Mammary epithelial cell (primary cell): ENCODE measurements at regions of chr20 and their contacts with region 1.

Region 1: GRCh38 chr20:64145458-64145857 is 18.8 kb upstream of the MYT1 start:
- DNase-seq: no peak
- H3K4me3 ChIP-seq: no peak overlapping the region
- H3K27ac ChIP-seq: no peak overlapping the region
- H3K4me1 ChIP-seq: no peaks in the 10 kb centered on the region
- H3K27me3 ChIP-seq: no peaks in the 10 kb centered on the region
- CTCF ChIP-seq: peak in 1 of 2 donors; percentile 9

Region 2: DNA sequence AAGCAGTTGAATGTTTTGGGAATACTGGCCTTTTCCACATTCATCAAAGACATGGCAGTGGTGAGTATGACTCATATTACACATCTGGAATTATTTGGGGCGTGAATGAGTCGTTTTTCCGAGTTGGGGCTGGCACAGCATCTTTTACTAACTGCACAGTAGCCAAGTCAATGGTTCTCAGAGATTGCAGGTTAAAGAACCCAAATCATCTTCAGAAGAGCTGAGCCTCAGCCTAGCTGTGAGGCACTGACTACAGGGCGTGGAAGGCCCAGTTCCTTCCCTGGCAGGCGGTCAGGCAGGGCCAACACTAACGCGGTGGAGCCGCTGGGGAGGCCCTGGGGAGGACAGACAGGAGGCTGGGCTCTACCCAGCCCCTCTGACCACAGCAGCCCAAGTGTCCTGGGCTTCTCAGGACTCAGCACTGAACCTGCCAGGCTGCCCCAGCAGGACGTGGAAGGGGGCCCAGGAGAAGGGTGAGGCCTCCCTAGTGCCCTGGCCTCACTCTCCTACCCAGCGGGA is 551.4 kb before region 1 on chr20:
- CTCF ChIA-PET with region 1: no interaction called
- dilution Hi-C with region 1: loop called (anchors 10 kb)
- in situ Hi-C with region 1: no loop called
- intact Hi-C with region 1: no loop called
- DNase-seq: no peak
- H3K4me3 ChIP-seq: no peak overlapping the region
- H3K27ac ChIP-seq: no peak overlapping the region
- H3K4me1 ChIP-seq: peaks cover 9% of the 10 kb centered on the region
- H3K27me3 ChIP-seq: no peaks in the 10 kb centered on the region
- CTCF ChIP-seq: no peak

Region 3: GRCh38 chr20:64161356-64162238 is 16.1 kb after region 1 on chr20:
- CTCF ChIA-PET with region 1: no interaction called
- dilution Hi-C with region 1: no loop called
- in situ Hi-C with region 1: no loop called
- intact Hi-C with region 1: no loop called
- DNase-seq: peak; percentile 38
- H3K4me3 ChIP-seq: no peak overlapping the region
- H3K27ac ChIP-seq: no peak overlapping the region
- H3K4me1 ChIP-seq: no peaks in the 10 kb centered on the region
- H3K27me3 ChIP-seq: peaks cover 23% of the 10 kb centered on the region
- CTCF ChIP-seq: no peak